SK-N-SH (cell line): ENCODE measurements at regions of chr6 and their contacts with region 1.

Region 1: GRCh38 chr6:109705258-109705657 is 14.2 kb downstream of the FIG4 start:
- DNase-seq: peak; percentile 76
- H3K4me3 ChIP-seq: peak overlapping the region in 1 of 2 experiments; percentile 50; a peak in 1 of 4 replicates
- H3K27ac ChIP-seq: no peak overlapping the region
- H3K4me1 ChIP-seq: no peaks in the 10 kb centered on the region; a peak in 1 of 4 replicates
- H3K27me3 ChIP-seq: no peaks in the 10 kb centered on the region
- CTCF ChIP-seq: peak; percentile 100
- EP300 ChIP-seq: no peak
- RAD21 ChIP-seq: peak; percentile 100

Region 2: DNA sequence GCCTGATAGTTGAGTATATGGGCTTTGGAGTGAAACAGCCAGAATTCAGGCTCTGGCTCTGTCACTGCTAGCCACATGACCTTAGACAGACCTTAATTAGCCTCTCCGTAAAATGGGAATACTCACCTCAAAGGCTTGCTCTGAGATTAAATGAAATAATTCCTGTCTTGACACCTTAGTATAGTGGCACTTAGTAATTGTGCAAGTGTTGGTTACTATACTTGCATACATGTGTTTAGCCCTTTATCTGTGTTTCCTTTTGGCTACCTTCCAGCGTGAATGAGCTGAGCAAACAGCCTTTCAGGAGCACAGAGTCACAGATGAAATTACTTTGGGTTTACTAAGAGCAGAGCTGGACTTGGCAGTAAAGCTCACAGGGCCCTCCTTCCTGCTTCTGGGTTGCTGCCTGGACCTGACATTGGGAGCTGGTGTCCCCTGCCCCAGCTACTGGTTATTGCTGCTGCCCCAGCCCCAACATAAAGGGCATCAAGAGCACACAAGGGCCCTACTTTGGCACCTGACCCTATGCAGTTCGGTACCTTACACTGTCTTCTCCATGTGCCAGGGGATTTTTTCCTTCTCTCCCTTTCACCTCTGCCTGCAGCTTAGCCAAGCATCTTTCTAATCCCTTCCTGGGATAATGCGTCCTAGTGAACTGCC is 355.7 kb before region 1 on chr6:
- CTCF ChIA-PET with region 1: no interaction called
- POLR2A ChIA-PET with region 1: no interaction called
- DNase-seq: peak; percentile 43
- H3K4me3 ChIP-seq: no peak overlapping the region
- H3K27ac ChIP-seq: peak overlapping the region in 1 of 2 experiments; percentile 62; a peak in 1 of 4 replicates
- H3K4me1 ChIP-seq: peaks cover 0 to 20% of the 10 kb centered on the region in 2 experiments; a peak in 1 of 4 replicates
- H3K27me3 ChIP-seq: no peaks in the 10 kb centered on the region
- CTCF ChIP-seq: no peak
- EP300 ChIP-seq: no peak
- RAD21 ChIP-seq: no peak

Region 3: GRCh38 chr6:109690737-109691621 is 14.3 kb before region 1 on chr6 and contains the starts of genes AK9 and FIG4:
- CTCF ChIA-PET with region 1: interaction called, 19 read pairs
- POLR2A ChIA-PET with region 1: no interaction called
- DNase-seq: peak; percentile 96
- H3K4me3 ChIP-seq: peak within 1 kb of the TSS; percentile 88 to 96
- H3K27ac ChIP-seq: peak within 1 kb of the TSS; percentile 51 to 87
- H3K4me1 ChIP-seq: peaks cover 0 to 3% of the 10 kb centered on the region in 2 experiments; a peak in 3 of 4 replicates
- H3K27me3 ChIP-seq: no peaks in the 10 kb centered on the region
- CTCF ChIP-seq: peak; percentile 42
- EP300 ChIP-seq: no peak
- RAD21 ChIP-seq: 0 out of 2 replicates have a peak, but pooled peaks have one; percentile 14
- polyA plus RNA-seq, gene AK9: 0.76 and 1.1 TPM in 2 replicates
- polyA plus RNA-seq, gene FIG4: 6.8 and 8.4 TPM in 2 replicates

Region 4: DNA sequence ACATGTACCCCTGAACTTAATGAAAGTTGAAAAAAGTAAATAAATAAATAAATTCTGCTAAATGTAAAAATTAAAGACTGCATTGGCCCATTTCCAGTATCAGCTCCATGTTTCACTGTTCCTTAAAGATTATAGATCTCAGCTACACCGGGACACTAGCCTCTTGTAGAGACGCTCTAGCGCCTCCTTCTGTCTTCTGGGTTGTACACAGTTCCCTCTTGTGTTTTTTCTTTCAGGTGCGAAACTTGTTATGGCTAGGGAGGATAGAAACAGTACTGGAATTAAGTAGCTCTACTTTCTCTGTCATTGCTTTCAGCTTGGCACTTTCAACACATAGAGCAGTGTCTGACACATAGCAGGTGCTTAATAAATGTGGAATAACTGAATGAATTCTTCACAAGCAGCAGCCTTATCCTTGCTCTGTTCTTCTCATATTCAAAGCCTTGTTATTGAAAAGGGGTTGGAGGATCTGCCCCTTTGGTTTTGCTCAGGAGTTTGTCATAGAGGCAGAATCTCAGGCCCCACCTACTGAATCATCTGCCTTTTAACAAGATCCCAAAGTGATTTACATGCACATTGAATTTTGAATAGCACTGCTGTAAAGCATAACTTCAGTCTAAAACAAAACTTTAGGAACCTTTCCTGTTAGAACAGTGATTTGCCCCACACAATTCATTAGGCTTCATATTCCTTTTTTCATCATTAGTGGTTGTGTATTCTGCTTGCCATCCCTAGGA is 78.2 kb after region 1 on chr6:
- CTCF ChIA-PET with region 1: interaction called, 15 read pairs
- POLR2A ChIA-PET with region 1: no interaction called
- DNase-seq: no peak
- H3K4me3 ChIP-seq: no peak overlapping the region; a peak in 1 of 4 replicates
- H3K27ac ChIP-seq: no peak overlapping the region
- H3K4me1 ChIP-seq: peaks cover 0 to 16% of the 10 kb centered on the region in 2 experiments; a peak in 2 of 4 replicates
- H3K27me3 ChIP-seq: no peaks in the 10 kb centered on the region
- CTCF ChIP-seq: peak; percentile 40
- EP300 ChIP-seq: no peak
- RAD21 ChIP-seq: peak; percentile 27; the same call in 1 of the 2 replicates

Region 5: DNA sequence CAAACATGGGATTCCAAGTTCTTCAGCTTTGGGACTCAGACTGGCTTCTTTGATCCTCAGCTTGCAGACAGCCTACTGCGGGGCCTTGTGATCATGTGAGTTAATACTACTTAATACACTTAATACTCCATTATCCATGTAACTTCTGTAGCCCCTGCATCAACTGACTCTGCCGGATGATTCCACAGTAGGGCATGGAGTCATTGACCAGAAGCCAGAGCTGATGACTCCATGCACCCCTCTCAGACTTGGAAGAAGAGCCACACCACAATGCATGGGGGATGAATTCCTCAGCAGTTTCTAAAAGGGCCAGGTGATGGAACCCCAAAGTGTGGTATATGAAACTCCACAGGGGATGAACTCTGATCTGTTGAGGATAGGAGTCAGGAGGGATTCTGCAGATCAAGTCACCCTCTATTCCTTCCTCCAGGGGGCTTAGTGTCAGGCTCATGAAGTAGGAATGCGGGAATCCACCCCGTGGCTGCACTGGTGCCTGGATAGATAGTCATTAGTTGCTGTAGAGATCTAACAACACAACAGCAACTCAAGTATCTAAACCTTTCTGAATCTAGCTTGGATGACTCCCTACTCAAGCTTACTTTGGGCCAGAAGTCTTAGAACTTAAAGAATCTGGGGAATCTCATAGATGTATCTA is 343.1 kb after region 1 on chr6:
- CTCF ChIA-PET with region 1: interaction called, 295 read pairs
- POLR2A ChIA-PET with region 1: no interaction called
- DNase-seq: no peak
- H3K4me3 ChIP-seq: no peak overlapping the region
- H3K27ac ChIP-seq: no peak overlapping the region
- H3K4me1 ChIP-seq: no peaks in the 10 kb centered on the region
- H3K27me3 ChIP-seq: no peaks in the 10 kb centered on the region
- CTCF ChIP-seq: no peak
- EP300 ChIP-seq: no peak
- RAD21 ChIP-seq: no peak

Region 6: DNA sequence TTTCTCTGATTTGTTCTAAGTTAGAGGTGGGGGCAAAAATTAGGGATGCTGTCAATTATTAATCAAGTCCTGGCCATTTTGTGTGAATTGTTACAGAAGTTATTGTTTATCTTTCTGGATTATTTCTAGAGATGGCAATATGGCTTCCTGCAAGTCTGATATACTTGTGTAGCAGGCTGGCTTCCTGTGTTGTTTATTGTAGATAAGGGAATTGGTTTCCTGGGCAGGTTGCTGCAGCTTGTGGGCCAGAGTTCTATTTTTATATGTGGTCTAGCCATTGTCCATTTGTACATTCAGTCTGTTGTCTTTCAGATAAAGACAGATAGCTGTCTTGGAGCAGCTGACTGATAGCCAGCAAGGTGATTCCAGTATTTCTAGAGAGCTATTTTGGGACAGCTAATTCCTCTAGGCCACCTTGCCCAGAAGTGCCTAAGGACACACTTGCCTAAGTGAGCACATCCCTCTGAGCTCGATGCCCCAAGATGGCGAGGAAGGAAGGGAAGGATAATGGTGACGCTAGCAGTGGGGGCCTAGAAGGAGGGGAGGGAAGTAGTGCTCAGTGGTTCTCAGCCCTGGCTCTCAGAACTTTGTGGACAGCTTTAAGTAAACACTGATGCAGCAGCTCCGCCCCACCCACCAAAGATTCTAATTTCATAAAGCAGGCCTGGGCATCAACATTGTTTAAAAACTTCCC is 684.6 kb after region 1 on chr6:
- CTCF ChIA-PET with region 1: interaction called, 77 read pairs
- POLR2A ChIA-PET with region 1: no interaction called
- DNase-seq: no peak
- H3K4me3 ChIP-seq: no peak overlapping the region
- H3K27ac ChIP-seq: no peak overlapping the region
- H3K4me1 ChIP-seq: peaks cover 0 to 4% of the 10 kb centered on the region in 2 experiments; a peak in 2 of 4 replicates
- H3K27me3 ChIP-seq: no peaks in the 10 kb centered on the region
- CTCF ChIP-seq: no peak
- EP300 ChIP-seq: no peak
- RAD21 ChIP-seq: no peak